ENCODE measurements at regions of chr6 and their contacts with region 1.

Region 1: DNA sequence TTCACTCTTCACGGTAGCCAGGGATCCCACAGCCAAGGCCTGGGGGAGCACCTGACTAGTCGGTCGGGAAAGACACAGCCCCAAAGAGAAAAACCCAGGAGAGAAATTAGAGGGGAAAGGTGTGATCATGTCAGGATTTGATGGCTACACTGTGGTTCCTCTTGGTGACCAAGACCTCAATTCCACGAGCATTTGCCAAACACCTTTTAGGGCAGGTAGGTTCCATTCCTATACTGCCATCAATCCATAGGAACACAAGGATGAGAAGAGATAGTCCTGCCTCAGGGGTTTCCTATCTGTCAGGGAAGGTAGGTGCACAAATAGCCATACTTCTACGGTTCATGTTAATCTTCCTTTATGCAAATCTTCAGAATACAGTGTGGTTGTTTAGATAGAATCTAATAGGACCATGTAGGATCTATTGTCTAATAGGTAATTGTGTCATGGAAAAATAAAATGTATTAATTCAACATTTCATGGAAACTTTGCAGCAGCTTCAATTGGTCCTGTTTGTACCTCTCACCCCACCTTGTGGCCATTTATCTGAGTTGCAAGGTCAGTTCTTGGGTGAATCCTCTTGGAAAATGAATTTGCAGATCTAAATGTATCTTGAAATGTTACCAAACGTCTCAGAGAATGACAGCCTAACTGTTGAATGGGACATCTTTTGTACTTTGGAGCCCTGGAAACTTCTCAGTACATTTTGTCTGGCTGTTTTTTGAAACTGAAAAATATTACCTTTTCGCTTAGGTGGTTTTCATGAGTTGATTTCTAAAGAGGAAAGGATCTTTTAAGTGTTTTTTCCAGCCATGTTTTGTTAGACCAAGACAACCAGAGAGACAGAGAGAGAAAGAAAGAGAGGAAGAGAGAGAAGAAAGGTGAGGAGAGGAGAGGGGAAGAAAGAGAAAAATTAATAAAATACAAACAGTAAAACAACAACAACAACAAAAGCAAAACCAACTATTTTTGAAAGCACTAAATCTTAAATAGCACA is 33.7 kb upstream of the IYD start:
- DNase-seq: peak; percentile 46
- H3K4me3 Mint-ChIP-seq: no peak overlapping the region
- H3K27ac Mint-ChIP-seq: no peak overlapping the region
- H3K4me1 Mint-ChIP-seq: no peaks in the 10 kb centered on the region
- H3K27me3 Mint-ChIP-seq: peaks cover 20% of the 10 kb centered on the region

Region 2: GRCh38 chr6:150208611-150209352 is 126.3 kb before region 1 on chr6:
- CTCF ChIA-PET with region 1: no interaction called
- POLR2A ChIA-PET with region 1: no interaction called
- intact Hi-C with region 1: loop called (anchors 10 kb)
- DNase-seq: no peak
- H3K4me3 Mint-ChIP-seq: no peak overlapping the region
- H3K27ac Mint-ChIP-seq: no peak overlapping the region
- H3K4me1 Mint-ChIP-seq: no peaks in the 10 kb centered on the region
- H3K27me3 Mint-ChIP-seq: peaks cover 8% of the 10 kb centered on the region

Region 3: GRCh38 chr6:150352321-150353291 is 17.5 kb after region 1 on chr6:
- CTCF ChIA-PET with region 1: no interaction called
- POLR2A ChIA-PET with region 1: no interaction called
- intact Hi-C with region 1: no loop called
- DNase-seq: no peak
- H3K4me3 Mint-ChIP-seq: no peak overlapping the region
- H3K27ac Mint-ChIP-seq: no peak overlapping the region
- H3K4me1 Mint-ChIP-seq: no peaks in the 10 kb centered on the region
- H3K27me3 Mint-ChIP-seq: peaks cover 6% of the 10 kb centered on the region

Region 4: DNA sequence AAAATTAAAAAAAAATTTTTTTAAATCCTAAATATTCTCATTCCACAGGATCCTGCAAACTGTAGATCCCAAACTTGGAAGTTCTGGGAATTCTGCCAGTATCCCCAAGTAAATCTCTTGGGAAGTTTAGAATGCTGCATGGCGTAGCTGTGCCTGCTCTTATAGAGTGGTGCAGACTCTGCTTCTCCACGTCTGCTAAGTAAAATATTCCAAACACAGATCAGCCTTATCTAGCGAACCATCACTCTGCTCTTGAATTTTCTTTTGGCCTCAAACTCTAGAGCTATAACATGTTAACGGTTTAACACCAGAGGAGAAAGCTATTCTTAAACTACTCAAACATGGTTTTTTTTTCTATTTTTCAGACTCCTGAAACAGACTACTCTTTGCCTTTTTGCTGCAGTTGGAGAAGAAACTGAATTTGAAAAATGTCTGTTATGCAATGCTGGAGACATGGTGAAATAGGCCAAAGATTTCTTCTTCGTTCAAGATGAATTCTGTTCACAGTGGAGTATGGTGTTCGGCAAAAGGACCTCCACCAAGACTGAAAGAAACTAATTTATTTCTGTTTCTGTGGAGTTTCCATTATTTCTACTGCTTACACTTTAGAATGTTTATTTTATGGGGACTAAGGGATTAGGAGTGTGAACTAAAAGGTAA is 766.2 kb after region 1 on chr6:
- CTCF ChIA-PET with region 1: no interaction called
- POLR2A ChIA-PET with region 1: no interaction called
- intact Hi-C with region 1: no loop called
- DNase-seq: no peak
- H3K4me3 Mint-ChIP-seq: no peak overlapping the region
- H3K27ac Mint-ChIP-seq: no peak overlapping the region
- H3K4me1 Mint-ChIP-seq: peaks cover 16% of the 10 kb centered on the region
- H3K27me3 Mint-ChIP-seq: no peaks in the 10 kb centered on the region